ENCODE measurements at regions of chr2 and their contacts with region 1.

Region 1: GRCh38 chr2:228657807-228658402 is 476.4 kb upstream of the SPHKAP start:
- DNase-seq: peak; percentile 1 to 41
- H3K4me3 ChIP-seq: no peak overlapping the region
- H3K27ac ChIP-seq: no peak overlapping the region
- H3K4me1 ChIP-seq: 0 out of 2 replicates have a peak, but pooled peaks cover 4% of the 10 kb centered on the region
- H3K27me3 ChIP-seq: no peaks in the 10 kb centered on the region
- CTCF ChIP-seq: peak; percentile 76

Region 2: DNA sequence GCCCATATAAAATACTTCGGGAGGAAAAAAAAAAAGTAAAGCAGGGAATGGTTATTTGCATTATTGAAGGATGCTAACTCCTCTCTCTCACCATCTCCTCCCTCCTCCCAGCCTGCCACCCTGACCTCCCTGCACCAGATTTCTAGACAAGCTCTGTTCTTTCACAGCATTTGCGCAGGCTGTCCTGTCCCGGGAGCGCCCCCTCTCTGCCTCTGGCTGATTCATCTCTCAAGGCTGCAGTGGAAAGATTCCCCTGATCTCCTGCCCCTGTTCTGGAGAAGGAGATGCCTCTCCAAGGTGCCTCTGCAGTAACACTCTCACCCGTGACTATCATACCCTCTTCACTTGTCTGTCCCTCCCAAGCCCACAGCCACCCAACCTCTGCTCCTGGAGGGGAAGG is 1532.4 kb before region 1 on chr2:
- CTCF ChIA-PET with region 1: no interaction called
- POLR2A ChIA-PET with region 1: no interaction called
- intact Hi-C with region 1: loop called (anchors 10 kb)
- DNase-seq: no peak
- H3K4me3 ChIP-seq: no peak overlapping the region
- H3K27ac ChIP-seq: no peak overlapping the region
- H3K4me1 ChIP-seq: no peaks in the 10 kb centered on the region
- H3K27me3 ChIP-seq: no peaks in the 10 kb centered on the region
- CTCF ChIP-seq: no peak

Region 3: GRCh38 chr2:227890495-227891079 is 767.3 kb before region 1 on chr2:
- CTCF ChIA-PET with region 1: interaction called, 3 read pairs
- POLR2A ChIA-PET with region 1: no interaction called
- intact Hi-C with region 1: loop called (anchors 10 kb)
- DNase-seq: no peak
- H3K4me3 ChIP-seq: no peak overlapping the region
- H3K27ac ChIP-seq: no peak overlapping the region
- H3K4me1 ChIP-seq: no peaks in the 10 kb centered on the region
- H3K27me3 ChIP-seq: no peaks in the 10 kb centered on the region
- CTCF ChIP-seq: peak; percentile 79

Region 4: GRCh38 chr2:228048838-228049490 is 608.9 kb before region 1 on chr2:
- CTCF ChIA-PET with region 1: interaction called, 3 read pairs
- POLR2A ChIA-PET with region 1: no interaction called
- intact Hi-C with region 1: loop called (anchors 1 kb)
- DNase-seq: peak; percentile 30 to 70
- H3K4me3 ChIP-seq: no peak overlapping the region
- H3K27ac ChIP-seq: no peak overlapping the region
- H3K4me1 ChIP-seq: peaks cover 12% of the 10 kb centered on the region
- H3K27me3 ChIP-seq: no peaks in the 10 kb centered on the region
- CTCF ChIP-seq: peak; percentile 67

Region 5: DNA sequence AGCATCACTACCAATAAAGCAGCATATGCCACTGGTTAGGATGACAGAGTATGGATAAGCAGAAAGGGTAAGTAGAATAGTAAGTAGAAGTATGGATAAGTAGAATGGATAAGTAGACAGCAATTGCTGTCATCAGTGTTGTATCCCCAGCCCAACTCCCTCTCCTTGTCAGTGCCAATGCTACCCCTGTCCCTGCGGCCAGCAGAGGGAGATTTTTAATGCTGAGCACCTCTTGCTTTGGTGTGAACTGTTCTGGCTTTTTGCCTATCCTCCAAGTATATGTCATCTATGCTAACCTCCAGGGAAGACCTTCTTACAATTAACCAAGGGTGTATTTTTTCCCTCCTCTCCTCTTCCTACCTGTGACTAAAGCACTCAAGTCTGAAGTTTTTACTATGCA is 339.7 kb before region 1 on chr2:
- CTCF ChIA-PET with region 1: no interaction called
- POLR2A ChIA-PET with region 1: no interaction called
- intact Hi-C with region 1: loop called (anchors 5 kb)
- DNase-seq: peak in 1 of 2 experiments; percentile 15
- H3K4me3 ChIP-seq: no peak overlapping the region
- H3K27ac ChIP-seq: no peak overlapping the region
- H3K4me1 ChIP-seq: no peaks in the 10 kb centered on the region
- H3K27me3 ChIP-seq: no peaks in the 10 kb centered on the region
- CTCF ChIP-seq: peak; percentile 57

Region 6: DNA sequence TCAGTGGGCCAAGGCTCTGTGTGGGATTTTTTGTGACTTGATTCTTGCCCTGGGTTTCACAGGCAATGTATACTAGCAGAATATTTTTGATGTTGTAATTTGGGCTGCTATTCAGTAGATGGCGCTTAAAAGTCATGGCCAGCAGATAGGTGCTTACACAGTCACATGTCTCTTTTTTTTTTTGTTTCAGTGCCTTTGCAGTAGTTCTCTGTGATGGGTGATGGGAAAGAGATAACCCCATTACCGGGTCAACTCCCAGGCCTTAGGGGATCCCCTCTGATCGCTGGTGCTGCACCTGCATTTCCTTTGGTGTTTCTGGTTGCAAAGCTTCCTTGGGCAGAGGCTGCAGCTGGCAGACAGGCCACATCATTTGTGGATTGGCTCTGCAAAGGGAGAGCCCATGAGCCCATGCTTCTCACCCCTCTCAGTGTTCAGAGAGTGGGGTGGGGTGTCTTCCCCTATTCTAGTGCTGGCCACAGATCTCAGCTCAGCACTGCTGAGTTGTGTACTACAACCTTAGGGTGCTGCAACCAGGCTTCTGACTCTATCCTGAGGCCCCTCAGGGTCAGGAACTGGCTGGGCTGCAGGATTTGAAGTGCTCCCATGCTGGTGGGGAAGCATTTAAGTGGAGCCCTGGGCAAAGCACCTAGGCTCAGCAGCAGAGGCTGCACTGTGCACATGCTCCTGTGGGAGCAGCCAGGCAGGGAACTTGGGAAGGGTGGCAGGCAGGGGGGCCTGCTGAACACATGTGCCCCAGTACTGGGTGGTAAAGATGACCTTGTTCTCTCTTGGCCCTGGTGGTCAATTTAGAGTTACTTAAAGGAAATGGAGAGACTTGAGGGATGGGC is 256.6 kb before region 1 on chr2:
- CTCF ChIA-PET with region 1: no interaction called
- POLR2A ChIA-PET with region 1: no interaction called
- intact Hi-C with region 1: loop called (anchors 5 kb)
- DNase-seq: no peak
- H3K4me3 ChIP-seq: no peak overlapping the region
- H3K27ac ChIP-seq: no peak overlapping the region
- H3K4me1 ChIP-seq: no peaks in the 10 kb centered on the region
- H3K27me3 ChIP-seq: no peaks in the 10 kb centered on the region
- CTCF ChIP-seq: peak; percentile 54

Region 7: DNA sequence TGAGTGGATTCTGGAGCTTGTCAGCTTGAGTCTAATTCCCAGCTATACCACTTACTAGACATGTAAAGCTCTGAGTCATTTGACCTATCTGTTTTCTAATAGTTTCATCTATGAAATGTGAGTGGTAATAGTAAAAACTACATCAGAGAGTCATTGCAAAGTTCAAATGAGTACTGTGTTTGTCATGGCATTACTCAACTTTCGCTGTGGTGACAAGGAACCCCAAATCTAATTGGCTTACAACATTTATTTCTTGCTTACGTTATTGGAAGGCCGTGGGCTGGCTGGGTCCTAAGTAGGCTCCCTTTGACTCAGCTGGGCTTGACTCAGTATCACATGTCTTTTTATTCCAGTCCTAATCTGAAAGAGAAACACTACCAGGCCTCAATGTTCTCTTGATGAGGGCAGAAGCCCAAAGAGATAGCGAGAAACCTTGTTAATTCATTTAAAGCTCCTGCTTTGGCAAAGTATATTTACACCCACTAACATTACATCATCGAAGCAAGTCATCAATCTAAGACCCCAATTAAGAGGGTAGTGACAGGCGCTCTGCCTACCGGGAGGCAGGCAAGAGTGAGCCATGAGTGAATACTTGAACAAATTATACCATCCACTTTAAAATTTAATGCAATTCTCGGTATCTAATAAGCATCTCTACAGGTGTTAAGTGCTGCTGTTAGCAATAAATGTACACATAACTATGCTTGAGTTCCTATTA is 44.6 kb before region 1 on chr2:
- CTCF ChIA-PET with region 1: no interaction called
- POLR2A ChIA-PET with region 1: no interaction called
- intact Hi-C with region 1: no loop called
- DNase-seq: peak in 1 of 2 experiments; percentile 36
- H3K4me3 ChIP-seq: no peak overlapping the region
- H3K27ac ChIP-seq: no peak overlapping the region
- H3K4me1 ChIP-seq: no peaks in the 10 kb centered on the region
- H3K27me3 ChIP-seq: no peaks in the 10 kb centered on the region
- CTCF ChIP-seq: no peak

Region 8: DNA sequence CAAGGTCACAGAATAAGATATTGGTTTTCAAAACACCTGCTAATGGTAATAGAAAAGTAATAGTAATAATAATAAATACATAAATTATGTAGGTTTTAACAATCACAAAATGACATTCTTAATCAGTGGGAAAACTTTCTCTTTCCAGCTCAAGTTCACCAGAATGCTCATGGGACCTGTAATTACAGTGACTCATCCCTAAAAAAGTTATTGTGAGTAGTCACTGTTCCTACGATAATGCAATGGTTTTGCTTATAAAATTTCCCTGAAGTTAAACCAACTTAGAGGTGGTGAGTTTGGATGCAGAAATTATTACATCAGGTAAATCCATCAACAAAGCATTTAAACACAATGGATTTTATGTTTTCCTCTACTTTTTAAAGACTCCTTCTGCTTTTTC is 110.9 kb after region 1 on chr2:
- CTCF ChIA-PET with region 1: no interaction called
- POLR2A ChIA-PET with region 1: no interaction called
- intact Hi-C with region 1: no loop called
- DNase-seq: no peak
- H3K4me3 ChIP-seq: no peak overlapping the region
- H3K27ac ChIP-seq: no peak overlapping the region
- H3K4me1 ChIP-seq: no peaks in the 10 kb centered on the region
- H3K27me3 ChIP-seq: no peaks in the 10 kb centered on the region
- CTCF ChIP-seq: no peak

Measured in PC-9 (cell line).